ENCODE measurements at regions of chr1 and their contacts with region 1.

Region 1: DNA sequence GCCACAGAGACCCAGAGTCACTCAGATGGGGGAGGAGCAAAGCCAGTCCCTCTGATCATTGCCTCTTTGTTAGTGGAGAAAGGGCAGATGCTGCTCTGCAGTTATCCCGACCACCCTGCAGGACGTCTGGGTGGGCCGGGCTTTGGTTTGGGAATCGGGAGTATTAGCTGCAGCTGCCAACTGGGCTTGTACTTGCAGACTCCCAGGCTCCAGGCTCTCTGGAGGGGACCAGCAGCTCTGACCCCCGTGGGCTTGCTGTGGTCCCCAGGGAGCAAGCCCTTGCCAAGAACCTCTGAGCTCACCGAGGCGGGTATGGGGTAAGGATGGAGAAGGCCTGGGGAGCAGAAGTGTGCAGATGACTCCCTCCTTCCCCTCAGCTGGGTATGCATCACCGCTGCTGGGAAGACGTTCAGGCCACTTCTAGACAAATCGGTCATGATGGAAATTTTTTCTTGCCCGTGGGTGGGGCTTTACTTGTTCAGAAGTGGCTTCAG is 21.6 kb downstream of the MAPKAPK2 start:
- DNase-seq: no peak
- ATAC-seq: no peak
- H3K4me3 ChIP-seq: no peak overlapping the region
- H3K27ac ChIP-seq: no peak overlapping the region
- H3K4me1 ChIP-seq: peaks cover 15 to 35% of the 10 kb centered on the region in 2 experiments; a peak in 4 of 5 replicates
- H3K27me3 ChIP-seq: no peaks in the 10 kb centered on the region
- CTCF ChIP-seq: no peak
- EP300 ChIP-seq: no peak
- POLR2A ChIP-seq: no peak
- RAD21 ChIP-seq: no peak

Region 2: GRCh38 chr1:206674745-206675175 is 31.6 kb before region 1 on chr1:
- CTCF ChIA-PET with region 1: no interaction called
- POLR2A ChIA-PET with region 1: interaction called, 6 read pairs
- in situ Hi-C with region 1: no loop called
- intact Hi-C with region 1: loop called (anchors 5 kb)
- DNase-seq: peak in 2 of 4 experiments; percentile 62 to 69
- ATAC-seq: no peak
- H3K4me3 ChIP-seq: no peak overlapping the region
- H3K27ac ChIP-seq: no peak overlapping the region; the same call in 2 of the 3 replicates
- H3K4me1 ChIP-seq: peaks cover 42 to 72% of the 10 kb centered on the region in 2 experiments
- H3K27me3 ChIP-seq: no peaks in the 10 kb centered on the region
- CTCF ChIP-seq: no peak
- EP300 ChIP-seq: no peak
- POLR2A ChIP-seq: no peak
- RAD21 ChIP-seq: no peak

Region 3: GRCh38 chr1:206684478-206685333 is 21.6 kb before region 1 on chr1 and contains the start of gene MAPKAPK2:
- CTCF ChIA-PET with region 1: no interaction called
- POLR2A ChIA-PET with region 1: interaction called, 130 read pairs
- in situ Hi-C with region 1: no loop called
- intact Hi-C with region 1: no loop called
- DNase-seq: peak; percentile 87 to 99 (median 99)
- ATAC-seq: peak; percentile 72
- H3K4me3 ChIP-seq: peak within 1 kb of the TSS; percentile 69
- H3K27ac ChIP-seq: peak within 1 kb of the TSS; percentile 80
- H3K4me1 ChIP-seq: peaks cover 33 to 61% of the 10 kb centered on the region in 2 experiments
- H3K27me3 ChIP-seq: no peaks in the 10 kb centered on the region; a peak in 1 of 5 replicates
- CTCF ChIP-seq: no peak
- EP300 ChIP-seq: no peak
- POLR2A ChIP-seq: no peak
- RAD21 ChIP-seq: no peak
- polyA plus RNA-seq, gene MAPKAPK2: 0.63 to 1.3 TPM

Region 4: DNA sequence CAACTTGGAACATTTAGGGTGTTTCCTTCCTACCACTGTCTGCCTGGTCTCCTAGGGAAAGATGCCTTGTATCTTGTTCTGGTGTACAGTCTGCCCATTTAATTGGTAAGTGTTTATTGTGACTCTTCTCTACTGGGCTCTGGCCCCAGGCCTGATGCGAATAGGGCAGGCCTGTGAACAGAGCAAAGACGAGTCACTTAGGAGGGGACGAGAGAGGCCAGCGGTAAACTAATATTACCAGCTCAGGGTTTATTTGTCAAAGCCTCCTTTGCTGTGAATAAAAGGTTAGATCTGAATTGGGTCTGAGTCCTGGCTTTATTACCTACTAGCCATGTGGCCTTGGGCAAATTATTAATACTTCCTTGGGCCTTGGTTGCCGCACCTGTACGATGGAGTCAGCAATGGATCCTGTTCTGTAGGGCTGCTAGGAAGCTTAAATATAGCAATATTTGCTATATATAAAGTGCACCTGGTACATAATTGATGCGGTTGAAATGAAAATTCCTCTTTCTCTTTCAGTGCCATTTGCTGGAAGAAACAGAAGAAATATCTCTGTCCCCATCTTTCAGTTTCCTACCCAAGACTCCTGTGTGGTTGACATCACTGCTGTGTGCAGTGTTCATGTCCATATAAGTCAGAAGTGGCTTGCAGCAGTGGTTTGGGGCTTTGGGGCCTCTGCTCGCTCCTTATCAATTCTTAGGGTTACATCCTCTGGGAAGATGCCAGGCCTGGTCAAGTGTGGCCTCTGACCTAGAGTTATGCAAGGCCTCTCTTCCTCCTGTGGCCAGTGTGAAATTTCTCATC is 10.7 kb after region 1 on chr1:
- CTCF ChIA-PET with region 1: no interaction called
- POLR2A ChIA-PET with region 1: interaction called, 21 read pairs
- in situ Hi-C with region 1: no loop called
- intact Hi-C with region 1: no loop called
- DNase-seq: peak in 2 of 4 experiments; percentile 72 to 92
- ATAC-seq: peak; percentile 75
- H3K4me3 ChIP-seq: no peak overlapping the region
- H3K27ac ChIP-seq: peak overlapping the region; percentile 57
- H3K4me1 ChIP-seq: peaks cover 38 to 66% of the 10 kb centered on the region in 2 experiments
- H3K27me3 ChIP-seq: no peaks in the 10 kb centered on the region
- CTCF ChIP-seq: no peak
- EP300 ChIP-seq: peak; percentile 83
- POLR2A ChIP-seq: no peak
- RAD21 ChIP-seq: peak in 1 of 2 experiments; percentile 40; a peak in 2 of 4 replicates

Measured in K562 (cell line).